Naive thymus-derived CD4-positive, alpha-beta T cell (primary cell): ENCODE measurements at regions of chr3 and their contacts with region 1.

Region 1: GRCh38 chr3:15377961-15378791 is 45.8 kb upstream of the SH3BP5 start:
- DNase-seq: peak; percentile 80 to 96 (median 93)
- ATAC-seq: peak; percentile 99
- H3K4me3 ChIP-seq: no peak overlapping the region
- H3K4me3 Mint-ChIP-seq: peak overlapping the region in 5 of 10 donors; percentile 9 to 54 (median 17)
- H3K27ac ChIP-seq: peak overlapping the region; percentile 76
- H3K27ac Mint-ChIP-seq: peak overlapping the region; percentile 78 to 97 (median 93)
- H3K4me1 ChIP-seq: peaks cover 4 to 5% of the 10 kb centered on the region in 2 donors
- H3K4me1 Mint-ChIP-seq: peaks cover 8 to 14% (median 13%) of the 10 kb centered on the region in 7 donors
- H3K27me3 ChIP-seq: no peaks in the 10 kb centered on the region
- H3K27me3 Mint-ChIP-seq: no peaks in the 10 kb centered on the region

Region 2: DNA sequence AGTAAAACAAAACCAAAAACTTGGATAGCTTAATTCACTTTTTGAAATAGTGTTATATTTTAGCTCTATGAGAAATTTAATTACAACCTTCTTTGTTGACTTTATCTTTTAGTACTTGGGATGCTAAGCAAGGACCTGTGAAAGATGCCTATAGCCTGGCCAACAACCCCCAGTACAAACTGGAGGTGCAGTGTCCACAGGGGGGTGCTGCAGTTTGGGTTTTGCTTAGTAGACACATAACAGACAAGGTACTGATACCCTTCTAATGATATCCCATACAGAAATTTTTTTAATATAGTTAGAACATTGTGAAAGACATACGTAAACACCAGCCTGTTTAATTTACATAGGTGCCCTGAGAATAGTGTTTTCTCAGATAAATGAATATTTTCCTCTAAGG is 136.8 kb before region 1 on chr3:
- CTCF ChIA-PET with region 1: interaction called, 3 read pairs
- POLR2A ChIA-PET with region 1: no interaction called
- intact Hi-C with region 1: loop called (anchors 1 kb)
- DNase-seq: peak in 6 of 9 donors; percentile 26 to 47 (median 38)
- ATAC-seq: peak; percentile 74
- H3K4me3 ChIP-seq: no peak overlapping the region
- H3K4me3 Mint-ChIP-seq: no peak overlapping the region
- H3K27ac ChIP-seq: no peak overlapping the region
- H3K27ac Mint-ChIP-seq: peak overlapping the region in 2 of 9 donors; percentile 36 to 52
- H3K4me1 ChIP-seq: no peaks in the 10 kb centered on the region
- H3K4me1 Mint-ChIP-seq: peaks cover 4 to 16% (median 9%) of the 10 kb centered on the region in 7 donors
- H3K27me3 ChIP-seq: no peaks in the 10 kb centered on the region
- H3K27me3 Mint-ChIP-seq: no peaks in the 10 kb centered on the region

Region 3: DNA sequence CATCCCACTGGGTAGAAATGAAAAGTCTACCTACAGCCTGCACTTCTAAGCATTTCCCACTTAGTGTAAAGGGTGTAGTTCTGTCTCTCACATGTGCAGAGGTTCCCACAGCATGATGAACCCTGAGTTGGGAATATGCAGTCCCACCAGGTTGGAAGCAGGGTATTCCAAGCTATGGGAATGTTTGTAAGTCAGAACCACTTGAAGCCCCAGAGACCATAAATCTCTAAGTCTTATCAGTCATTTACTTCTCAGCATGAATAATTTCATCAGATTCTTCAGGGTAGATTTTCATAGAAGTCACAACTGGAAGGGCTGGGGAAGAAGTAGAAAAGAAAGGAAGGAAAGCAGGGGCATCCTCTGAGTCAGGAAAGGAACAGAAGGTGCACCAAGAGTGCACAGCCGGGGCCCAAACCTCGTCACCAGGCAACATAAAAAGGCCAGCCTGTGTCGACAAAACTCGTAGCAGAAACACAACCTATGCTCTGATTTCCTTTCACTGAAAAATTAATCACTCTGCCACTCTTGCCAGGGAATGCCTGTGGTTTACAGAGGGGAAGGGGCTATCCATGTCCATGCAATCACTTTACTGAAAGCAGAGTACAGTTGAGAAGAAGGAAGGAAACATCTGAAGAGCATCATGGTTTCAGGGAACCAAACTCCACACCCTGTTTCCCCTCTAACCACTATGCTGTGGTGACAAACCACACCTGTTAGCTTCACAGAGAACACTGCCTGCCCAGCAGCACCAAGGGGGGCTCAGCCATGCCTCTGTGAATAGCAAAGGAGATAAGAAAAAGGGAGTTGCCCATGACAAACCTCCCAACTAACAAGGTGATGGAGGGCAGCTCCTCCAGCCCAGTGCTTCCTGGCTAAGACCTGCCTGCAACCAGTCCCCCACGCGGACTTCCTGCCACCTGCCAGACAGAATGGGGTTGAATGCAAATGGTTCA is 86.3 kb before region 1 on chr3:
- CTCF ChIA-PET with region 1: interaction called, 5 read pairs
- POLR2A ChIA-PET with region 1: interaction called, 4 read pairs
- intact Hi-C with region 1: loop called (anchors 1 kb)
- DNase-seq: peak in 8 of 9 donors; percentile 61 to 78 (median 68)
- ATAC-seq: peak; percentile 84
- H3K4me3 ChIP-seq: peak overlapping the region; percentile 28
- H3K4me3 Mint-ChIP-seq: peak overlapping the region; percentile 74 to 86 (median 80)
- H3K27ac ChIP-seq: peak overlapping the region; percentile 23
- H3K27ac Mint-ChIP-seq: peak overlapping the region; percentile 77 to 97 (median 94)
- H3K4me1 ChIP-seq: peaks cover 58 to 62% of the 10 kb centered on the region in 2 donors
- H3K4me1 Mint-ChIP-seq: peaks cover 64 to 96% (median 85%) of the 10 kb centered on the region in 7 donors
- H3K27me3 ChIP-seq: no peaks in the 10 kb centered on the region
- H3K27me3 Mint-ChIP-seq: no peaks in the 10 kb centered on the region

Region 4: GRCh38 chr3:15332405-15333098 is 45.6 kb before region 1 on chr3 and contains the start of gene SH3BP5:
- CTCF ChIA-PET with region 1: interaction called, 8 read pairs
- POLR2A ChIA-PET with region 1: interaction called, 3 read pairs
- intact Hi-C with region 1: loop called (anchors 1 kb)
- DNase-seq: peak; percentile 52 to 82 (median 71)
- ATAC-seq: peak; percentile 94
- H3K4me3 ChIP-seq: peak within 1 kb of the TSS; percentile 96
- H3K4me3 Mint-ChIP-seq: peak within 1 kb of the TSS; percentile 93 to 99 (median 95)
- H3K27ac ChIP-seq: peak within 1 kb of the TSS; percentile 86
- H3K27ac Mint-ChIP-seq: peak within 1 kb of the TSS; percentile 87 to 95 (median 91)
- H3K4me1 ChIP-seq: peaks cover 37 to 45% of the 10 kb centered on the region in 2 donors
- H3K4me1 Mint-ChIP-seq: peaks cover 35 to 57% (median 54%) of the 10 kb centered on the region in 7 donors
- H3K27me3 ChIP-seq: no peaks in the 10 kb centered on the region
- H3K27me3 Mint-ChIP-seq: no peaks in the 10 kb centered on the region
- total RNA-seq, gene SH3BP5: 18.5 to 64.7 (median 39.5) TPM

Region 5: GRCh38 chr3:15361494-15362212 is 16.5 kb before region 1 on chr3:
- CTCF ChIA-PET with region 1: no interaction called
- POLR2A ChIA-PET with region 1: interaction called, 4 read pairs
- intact Hi-C with region 1: loop called (anchors 1 to 2 kb)
- DNase-seq: peak in 1 of 9 donors; percentile 59
- ATAC-seq: peak; percentile 49
- H3K4me3 ChIP-seq: no peak overlapping the region
- H3K4me3 Mint-ChIP-seq: peak overlapping the region; percentile 38 to 65 (median 54)
- H3K27ac ChIP-seq: no peak overlapping the region
- H3K27ac Mint-ChIP-seq: peak overlapping the region in 8 of 9 donors; percentile 37 to 73 (median 56)
- H3K4me1 ChIP-seq: peaks cover 21 to 29% of the 10 kb centered on the region in 2 donors
- H3K4me1 Mint-ChIP-seq: peaks cover 25 to 57% (median 38%) of the 10 kb centered on the region in 7 donors
- H3K27me3 ChIP-seq: no peaks in the 10 kb centered on the region
- H3K27me3 Mint-ChIP-seq: no peaks in the 10 kb centered on the region

Region 6: GRCh38 chr3:15427182-15427880 is 49.2 kb after region 1 on chr3 and contains the starts of genes EAF1 and METTL6:
- CTCF ChIA-PET with region 1: no interaction called
- POLR2A ChIA-PET with region 1: no interaction called
- intact Hi-C with region 1: loop called (anchors 1 kb)
- DNase-seq: peak; percentile 71 to 85 (median 84)
- ATAC-seq: peak; percentile 89
- H3K4me3 ChIP-seq: peak within 1 kb of the TSS; percentile 81
- H3K4me3 Mint-ChIP-seq: peak within 1 kb of the TSS; percentile 91 to 100 (median 98)
- H3K27ac ChIP-seq: peak within 1 kb of the TSS; percentile 91
- H3K27ac Mint-ChIP-seq: peak within 1 kb of the TSS; percentile 86 to 99 (median 94)
- H3K4me1 ChIP-seq: peaks cover 18 to 23% of the 10 kb centered on the region in 2 donors
- H3K4me1 Mint-ChIP-seq: peaks cover 47 to 82% (median 62%) of the 10 kb centered on the region in 7 donors
- H3K27me3 ChIP-seq: no peaks in the 10 kb centered on the region
- H3K27me3 Mint-ChIP-seq: no peaks in the 10 kb centered on the region
- total RNA-seq, gene EAF1: 17.8 to 61.9 (median 27.8) TPM
- total RNA-seq, gene METTL6: 7.9 to 23.0 (median 18.3) TPM